Dorsolateral prefrontal cortex (tissue), 120 donors: ENCODE measurements at regions of chr11 and their contacts with region 1.

Region 1: GRCh38 chr11:40306938-40307548 is 1152.4 kb downstream of the LRRC4C start:
- DNase-seq: peak in 1 of 10 donors; percentile 12
- H3K4me3 ChIP-seq: no peak overlapping the region
- H3K27ac ChIP-seq: no peak overlapping the region
- H3K27me3 ChIP-seq: no peaks in the 10 kb centered on the region
- CTCF ChIP-seq: peak; percentile 24 to 83 (median 67)

Region 2: GRCh38 chr11:40281052-40281580 is 25.9 kb before region 1 on chr11:
- intact Hi-C with region 1: no loop called
- DNase-seq: no peak
- H3K4me3 ChIP-seq: peak overlapping the region; percentile 20 to 69 (median 52)
- H3K27ac ChIP-seq: peak overlapping the region in 58 of 59 donors; percentile 26 to 94 (median 83)
- H3K27me3 ChIP-seq: no peaks in the 10 kb centered on the region
- CTCF ChIP-seq: no peak

Region 3: GRCh38 chr11:40388097-40388818 is 81.2 kb after region 1 on chr11:
- intact Hi-C with region 1: no loop called
- DNase-seq: no peak
- H3K4me3 ChIP-seq: no peak overlapping the region
- H3K27ac ChIP-seq: no peak overlapping the region
- H3K27me3 ChIP-seq: no peaks in the 10 kb centered on the region
- CTCF ChIP-seq: no peak

Region 4: DNA sequence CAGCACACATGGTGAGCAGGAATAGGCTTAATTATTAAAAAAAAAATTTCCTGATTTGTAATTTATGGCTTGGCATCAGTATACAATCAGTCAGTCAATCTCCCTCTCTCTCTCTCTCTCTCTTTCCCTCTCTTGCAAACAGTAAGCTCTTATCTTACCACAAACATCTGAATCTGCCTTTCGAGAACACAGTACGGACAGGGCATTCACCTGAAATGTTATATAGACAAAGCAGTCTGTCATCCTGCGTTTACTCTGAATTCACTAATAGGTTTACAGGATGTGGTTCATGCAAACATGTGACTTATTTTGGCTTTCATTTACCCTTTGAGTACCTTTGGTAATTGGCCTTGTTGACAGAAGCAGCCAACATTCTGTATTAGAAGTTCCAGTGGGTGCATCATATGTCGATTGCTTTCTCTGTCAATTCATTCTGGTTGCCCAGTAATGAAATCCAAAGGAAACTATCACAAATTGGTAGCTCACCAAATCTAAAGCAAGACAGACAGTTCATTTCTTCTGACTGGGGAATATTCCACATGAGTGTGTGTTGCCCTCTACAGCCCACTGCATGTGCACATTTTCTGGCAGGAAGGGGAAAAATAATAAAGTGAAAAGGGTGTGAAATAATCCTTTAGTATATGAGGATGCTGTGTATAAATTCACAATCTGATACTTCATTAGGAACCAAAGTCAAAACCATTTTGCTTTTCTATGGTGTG is 94.2 kb after region 1 on chr11:
- intact Hi-C with region 1: loop called in 1 of 2 experiments (anchors 10 kb)
- DNase-seq: no peak
- H3K4me3 ChIP-seq: no peak overlapping the region
- H3K27ac ChIP-seq: no peak overlapping the region
- H3K27me3 ChIP-seq: no peaks in the 10 kb centered on the region
- CTCF ChIP-seq: peak in 20 of 56 donors; percentile 7 to 46 (median 20)

Region 5: GRCh38 chr11:41201156-41201555 is 894.1 kb after region 1 on chr11:
- intact Hi-C with region 1: loop called in 1 of 2 experiments (anchors 5 kb)
- DNase-seq: peak in 6 of 10 donors; percentile 31 to 75 (median 52)
- H3K4me3 ChIP-seq: no peak overlapping the region
- H3K27ac ChIP-seq: no peak overlapping the region
- H3K27me3 ChIP-seq: no peaks in the 10 kb centered on the region
- CTCF ChIP-seq: peak; percentile 42 to 79 (median 64)